Tibial artery (tissue), 4 donors: ENCODE measurements at regions of chr9 and their contacts with region 1.

Region 1: DNA sequence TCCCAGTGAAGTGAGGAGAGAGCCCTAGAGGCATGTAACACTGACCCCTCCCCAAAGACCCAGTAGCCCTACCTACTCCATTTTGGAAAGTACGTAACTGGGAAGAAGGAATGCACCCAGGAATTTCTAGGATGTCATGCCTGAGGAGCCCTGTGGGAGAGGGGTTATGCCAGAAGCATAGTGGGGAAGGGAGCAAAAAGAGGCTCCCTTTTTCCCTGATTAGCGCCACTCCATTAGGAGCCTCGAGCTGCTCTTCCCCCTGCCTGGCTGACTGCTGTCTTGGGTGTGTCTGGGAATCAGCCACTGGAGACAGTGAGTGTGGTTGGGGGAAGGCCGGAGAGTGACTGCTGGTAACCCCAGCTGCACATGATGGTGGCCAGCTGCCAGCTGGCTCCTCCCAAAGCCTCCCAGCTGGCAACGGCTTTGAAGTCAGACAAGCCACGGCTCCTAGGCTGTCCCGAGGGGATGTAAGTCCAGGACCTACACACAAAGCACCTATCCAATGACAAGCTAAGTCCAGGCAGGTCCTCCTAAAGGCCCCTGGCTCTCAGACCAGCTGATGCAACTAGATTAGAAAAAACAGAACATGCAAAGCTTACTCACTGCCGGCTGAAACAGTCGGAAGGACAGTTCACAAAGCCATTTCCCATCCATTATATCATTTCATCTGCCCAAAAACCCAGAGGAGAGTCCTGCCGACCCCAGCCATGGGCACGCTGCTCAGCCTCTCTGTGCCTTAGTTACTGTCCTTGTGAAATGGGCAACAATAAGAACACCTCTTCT is 136.6 kb upstream of the ABCA1 start:
- DNase-seq: peak; percentile 95 to 97
- H3K4me3 ChIP-seq: no peak overlapping the region
- H3K27ac ChIP-seq: peak overlapping the region; percentile 86 to 92
- H3K4me1 ChIP-seq: peaks cover 7 to 33% (median 19%) of the 10 kb centered on the region in 4 donors
- H3K27me3 ChIP-seq: no peaks in the 10 kb centered on the region
- CTCF ChIP-seq: no peak

Region 2: GRCh38 chr9:104934691-104935500 is 129.6 kb before region 1 on chr9:
- intact Hi-C with region 1: loop called (anchors 10 kb)
- DNase-seq: no peak
- H3K4me3 ChIP-seq: no peak overlapping the region
- H3K27ac ChIP-seq: no peak overlapping the region
- H3K4me1 ChIP-seq: no peaks in the 10 kb centered on the region
- H3K27me3 ChIP-seq: no peaks in the 10 kb centered on the region
- CTCF ChIP-seq: no peak

Region 3: DNA sequence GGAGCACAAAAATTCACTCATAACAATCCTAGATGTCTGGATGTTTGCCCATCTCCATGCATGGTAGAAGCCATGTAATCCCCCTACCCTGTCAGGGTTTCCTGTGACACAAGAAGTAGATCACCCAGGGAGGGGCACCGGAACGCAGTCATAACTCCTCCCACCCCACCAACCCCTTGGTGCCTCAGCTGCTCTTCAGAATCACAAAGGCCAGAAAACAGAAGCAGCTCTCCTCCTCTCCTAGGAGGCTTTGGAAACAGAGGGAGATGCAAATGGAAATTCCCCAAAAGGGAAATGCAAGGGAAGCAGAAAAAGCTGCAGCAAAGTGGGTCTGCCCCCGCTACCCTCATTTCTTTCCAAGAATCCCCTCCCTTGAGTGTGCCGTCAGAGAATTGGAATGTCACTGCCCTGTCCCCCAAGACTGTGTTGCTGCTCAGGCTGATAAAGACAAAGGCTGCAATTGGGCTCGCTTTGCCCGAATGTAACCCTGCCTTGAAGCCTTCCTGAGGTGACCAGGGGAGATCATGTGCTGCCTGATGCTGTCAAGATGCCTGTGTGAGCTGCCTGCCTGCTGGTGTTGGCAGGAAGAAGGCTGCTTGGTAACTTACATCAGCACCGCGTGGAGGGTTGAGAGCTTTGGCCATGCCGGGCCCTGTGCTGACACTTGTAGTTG is 71.1 kb before region 1 on chr9:
- intact Hi-C with region 1: loop called (anchors 2 kb)
- DNase-seq: peak; percentile 93 to 98
- H3K4me3 ChIP-seq: no peak overlapping the region
- H3K27ac ChIP-seq: peak overlapping the region; percentile 89 to 94
- H3K4me1 ChIP-seq: peaks cover 0 to 38% (median 31%) of the 10 kb centered on the region in 4 donors
- H3K27me3 ChIP-seq: no peaks in the 10 kb centered on the region
- CTCF ChIP-seq: no peak